KBM-7 (cell line): ENCODE measurements at regions of chr2 and their contacts with region 1.

Region 1: DNA sequence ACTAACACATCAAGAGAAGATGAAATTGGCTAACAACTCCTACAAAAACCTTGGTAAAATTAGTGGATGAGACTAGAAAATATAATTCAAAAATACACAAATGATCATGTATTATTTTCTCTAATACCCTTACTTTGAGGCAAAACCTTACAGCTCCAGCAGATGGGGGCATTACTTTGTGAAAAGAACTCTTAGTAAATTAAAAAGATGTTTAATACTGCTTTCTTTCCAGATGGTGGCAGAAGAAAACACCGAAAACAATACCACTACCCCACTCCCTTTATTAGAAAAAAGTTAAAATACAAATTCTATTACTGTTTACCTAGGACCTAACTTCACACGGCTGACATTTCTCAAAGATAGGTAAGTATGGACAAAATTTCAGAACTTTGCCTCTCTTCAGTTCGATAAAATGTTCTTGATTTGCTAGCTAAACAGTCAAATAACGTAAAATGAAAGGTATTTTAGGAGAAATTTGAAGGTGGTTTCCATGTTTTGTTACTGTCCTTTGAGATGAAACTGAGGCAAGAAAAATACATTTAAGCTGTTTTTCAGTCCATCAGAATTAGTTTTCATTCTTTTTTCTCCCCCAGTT is 30.6 kb downstream of the ORC4 start:
- DNase-seq: peak; percentile 66

Region 2: DNA sequence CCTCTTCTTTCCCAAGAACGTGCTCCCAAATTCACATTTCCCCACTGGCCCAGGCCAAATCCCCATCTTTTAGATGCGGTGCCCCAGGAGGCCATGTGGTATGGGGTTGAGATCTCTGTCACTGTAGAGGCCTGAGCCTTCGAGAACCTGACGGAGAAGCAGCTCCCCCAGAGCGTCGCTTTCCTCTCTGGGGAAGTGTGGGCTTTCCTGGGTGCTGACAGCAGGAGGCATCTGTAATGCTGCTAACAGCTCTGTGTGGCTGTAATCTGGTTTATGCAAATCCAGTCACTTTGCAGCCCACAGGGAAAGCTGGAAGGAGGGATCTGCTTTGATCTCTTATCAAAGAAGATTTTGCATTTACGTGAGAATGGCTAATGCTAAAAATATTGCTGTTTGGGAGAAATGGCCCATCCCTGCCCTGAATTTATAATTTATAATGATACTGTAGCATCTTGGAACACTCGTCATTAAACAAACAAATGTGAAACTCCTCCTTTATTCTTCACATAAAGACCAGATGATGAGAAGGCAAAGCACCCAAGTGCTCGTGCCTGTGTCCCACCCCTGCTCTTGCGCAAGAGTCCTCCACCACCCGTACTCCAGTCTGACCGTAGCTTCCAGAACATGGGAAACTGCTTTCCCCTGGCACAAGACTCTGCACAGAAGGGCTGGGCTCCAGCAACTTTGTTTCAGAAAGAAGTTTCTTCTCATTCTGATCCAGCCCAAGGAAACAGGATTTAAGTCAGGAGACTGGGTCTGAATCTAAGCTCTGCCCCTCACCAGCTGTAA is 544.7 kb after region 1 on chr2:
- in situ Hi-C with region 1: loop called (anchors 25 kb)
- DNase-seq: no peak